BJ (cell line): ENCODE measurements at regions of chr12 and their contacts with region 1.

Region 1: DNA sequence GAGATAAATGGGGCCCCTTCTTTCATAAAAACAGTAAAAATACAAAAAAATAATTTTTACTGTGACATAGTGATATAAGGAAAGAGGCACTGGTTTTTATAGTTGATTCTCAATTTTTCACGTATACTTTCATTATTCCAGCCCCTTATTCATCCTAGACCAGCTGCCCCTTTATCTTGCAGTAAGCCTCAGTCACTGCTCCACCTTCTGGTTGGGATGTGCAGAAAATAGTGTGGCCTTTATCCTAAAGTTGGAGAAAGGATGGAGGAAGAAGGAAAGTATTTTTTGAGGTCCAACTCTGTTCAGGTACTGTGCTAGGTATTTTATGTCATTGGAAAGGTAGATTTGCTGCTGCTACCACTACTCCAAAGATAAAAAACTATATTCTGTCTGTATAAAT is 172.7 kb downstream of the ANO6 start:
- DNase-seq: no peak
- H3K4me3 ChIP-seq: no peak overlapping the region
- H3K27me3 ChIP-seq: no peaks in the 10 kb centered on the region
- CTCF ChIP-seq: peak; percentile 71

Region 2: GRCh38 chr12:45183246-45183645 is 205.3 kb before region 1 on chr12:
- CTCF ChIA-PET with region 1: interaction called, 42 read pairs
- POLR2A ChIA-PET with region 1: no interaction called
- DNase-seq: no peak
- H3K4me3 ChIP-seq: no peak overlapping the region
- H3K27me3 ChIP-seq: no peaks in the 10 kb centered on the region
- CTCF ChIP-seq: peak; percentile 53

Region 3: GRCh38 chr12:45215419-45216229 is 172.9 kb before region 1 on chr12 and contains the start of gene ANO6:
- CTCF ChIA-PET with region 1: interaction called, 15 read pairs
- POLR2A ChIA-PET with region 1: no interaction called
- DNase-seq: no peak
- H3K4me3 ChIP-seq: peak within 1 kb of the TSS; percentile 82
- H3K27me3 ChIP-seq: no peaks in the 10 kb centered on the region
- CTCF ChIP-seq: peak; percentile 40
- polyA plus RNA-seq, gene ANO6: 45.8 and 72.3 TPM in 2 replicates

Region 4: DNA sequence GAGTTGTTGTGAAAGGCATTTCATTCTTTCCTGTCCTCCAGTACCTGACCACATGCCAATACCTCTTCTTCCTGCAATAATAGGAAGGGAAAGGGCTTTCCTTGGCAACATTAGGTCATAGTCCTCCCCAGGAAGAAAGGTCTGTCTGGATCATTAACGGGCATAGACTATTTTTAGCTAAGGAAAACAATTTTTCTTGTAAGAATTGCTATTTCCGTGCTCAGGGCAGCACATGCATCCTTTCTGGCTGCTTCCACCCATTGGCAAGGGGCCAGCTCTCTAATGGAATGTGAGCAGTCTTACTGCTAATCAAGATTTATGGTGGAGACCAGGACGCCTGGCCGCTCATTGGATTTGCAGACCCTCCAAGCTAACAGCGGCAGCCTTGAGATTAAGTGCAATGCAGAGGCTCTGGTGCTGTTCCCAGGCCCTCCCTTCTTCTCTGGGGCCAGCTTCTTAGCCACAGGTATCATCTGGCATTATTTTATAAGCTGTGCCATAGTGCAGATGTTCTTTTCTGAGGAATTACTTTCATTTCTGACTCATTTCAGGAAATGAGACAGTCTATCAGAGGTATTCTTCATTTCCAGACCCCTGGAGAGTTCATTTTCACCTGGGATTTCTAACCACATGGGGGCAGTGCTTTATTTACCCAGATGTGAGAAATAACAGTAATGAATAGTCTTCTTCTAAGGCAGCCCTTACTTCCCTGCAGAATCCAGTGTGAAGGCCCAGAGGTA is 119.7 kb before region 1 on chr12:
- CTCF ChIA-PET with region 1: interaction called, 14 read pairs
- POLR2A ChIA-PET with region 1: no interaction called
- DNase-seq: peak; percentile 64
- H3K4me3 ChIP-seq: no peak overlapping the region
- H3K27me3 ChIP-seq: no peaks in the 10 kb centered on the region
- CTCF ChIP-seq: peak; percentile 52